ENCODE measurements at regions of chr2 and their contacts with region 1.

Region 1: GRCh38 chr2:9278439-9278838 is 71.8 kb downstream of the ASAP2 start:
- DNase-seq: no peak
- ATAC-seq: no peak
- H3K4me3 ChIP-seq: no peak overlapping the region
- H3K27ac ChIP-seq: no peak overlapping the region
- H3K4me1 ChIP-seq: peaks cover 5 to 75% (median 51%) of the 10 kb centered on the region in 9 donors
- H3K27me3 ChIP-seq: no peaks in the 10 kb centered on the region
- CTCF ChIP-seq: no peak

Region 2: GRCh38 chr2:9310377-9310776 is 31.9 kb after region 1 on chr2:
- intact Hi-C with region 1: loop called in 1 of 10 experiments (anchors 5 kb)
- DNase-seq: peak; percentile 61 to 67
- ATAC-seq: peak; percentile 75 to 94 (median 88)
- H3K4me3 ChIP-seq: no peak overlapping the region
- H3K27ac ChIP-seq: peak overlapping the region; percentile 59 to 91 (median 80)
- H3K4me1 ChIP-seq: peaks cover 20 to 66% (median 45%) of the 10 kb centered on the region in 9 donors
- H3K27me3 ChIP-seq: no peaks in the 10 kb centered on the region
- CTCF ChIP-seq: no peak

Measured in heart right ventricle (tissue), 16 donors.